ENCODE measurements at regions of chr17 and their contacts with region 1.

Region 1: GRCh38 chr17:35486920-35487732 is 38.6 kb upstream of the SLFN13 start:
- DNase-seq: peak; percentile 39 to 88 (median 77)
- ATAC-seq: peak; percentile 85
- H3K4me3 ChIP-seq: peak overlapping the region; percentile 90
- H3K4me3 Mint-ChIP-seq: peak overlapping the region; percentile 80 to 99 (median 94)
- H3K27ac ChIP-seq: peak overlapping the region; percentile 82
- H3K27ac Mint-ChIP-seq: peak overlapping the region; percentile 84 to 98 (median 97)
- H3K4me1 ChIP-seq: peaks cover 10 to 24% of the 10 kb centered on the region in 2 donors
- H3K4me1 Mint-ChIP-seq: peaks cover 23 to 67% (median 45%) of the 10 kb centered on the region in 7 donors
- H3K27me3 ChIP-seq: no peaks in the 10 kb centered on the region
- H3K27me3 Mint-ChIP-seq: peaks cover 0 to 12% (median 0%) of the 10 kb centered on the region in 5 donors

Region 2: GRCh38 chr17:35170968-35171771 is 316.0 kb before region 1 on chr17:
- CTCF ChIA-PET with region 1: no interaction called
- POLR2A ChIA-PET with region 1: no interaction called
- intact Hi-C with region 1: loop called in 1 of 2 experiments (anchors 5 kb)
- DNase-seq: peak in 7 of 9 donors; percentile 35 to 77 (median 70)
- ATAC-seq: peak; percentile 86
- H3K4me3 ChIP-seq: peak overlapping the region; percentile 25
- H3K4me3 Mint-ChIP-seq: peak overlapping the region in 8 of 10 donors; percentile 46 to 79 (median 70)
- H3K27ac ChIP-seq: peak overlapping the region; percentile 47
- H3K27ac Mint-ChIP-seq: peak overlapping the region; percentile 65 to 96 (median 89)
- H3K4me1 ChIP-seq: peaks cover 16 to 20% of the 10 kb centered on the region in 2 donors
- H3K4me1 Mint-ChIP-seq: peaks cover 24 to 59% (median 44%) of the 10 kb centered on the region in 7 donors
- H3K27me3 ChIP-seq: no peaks in the 10 kb centered on the region
- H3K27me3 Mint-ChIP-seq: no peaks in the 10 kb centered on the region

Region 3: GRCh38 chr17:35373534-35373983 is 113.6 kb before region 1 on chr17 and contains the start of gene SLFN11:
- CTCF ChIA-PET with region 1: interaction called, 3 read pairs
- POLR2A ChIA-PET with region 1: interaction called, 16 read pairs
- intact Hi-C with region 1: loop called (anchors 1 to 2 kb)
- DNase-seq: peak; percentile 49 to 94 (median 80)
- ATAC-seq: peak; percentile 92
- H3K4me3 ChIP-seq: peak within 1 kb of the TSS; percentile 92
- H3K4me3 Mint-ChIP-seq: peak within 1 kb of the TSS; percentile 94 to 99 (median 98)
- H3K27ac ChIP-seq: peak within 1 kb of the TSS; percentile 99
- H3K27ac Mint-ChIP-seq: peak within 1 kb of the TSS; percentile 92 to 99 (median 99)
- H3K4me1 ChIP-seq: peaks cover 2 to 13% of the 10 kb centered on the region in 2 donors
- H3K4me1 Mint-ChIP-seq: peaks cover 23 to 74% (median 54%) of the 10 kb centered on the region in 7 donors
- H3K27me3 ChIP-seq: no peaks in the 10 kb centered on the region
- H3K27me3 Mint-ChIP-seq: peaks cover 0 to 8% (median 0%) of the 10 kb centered on the region in 5 donors
- total RNA-seq, gene SLFN11: 13.8 to 71.9 (median 29.7) TPM

Region 4: DNA sequence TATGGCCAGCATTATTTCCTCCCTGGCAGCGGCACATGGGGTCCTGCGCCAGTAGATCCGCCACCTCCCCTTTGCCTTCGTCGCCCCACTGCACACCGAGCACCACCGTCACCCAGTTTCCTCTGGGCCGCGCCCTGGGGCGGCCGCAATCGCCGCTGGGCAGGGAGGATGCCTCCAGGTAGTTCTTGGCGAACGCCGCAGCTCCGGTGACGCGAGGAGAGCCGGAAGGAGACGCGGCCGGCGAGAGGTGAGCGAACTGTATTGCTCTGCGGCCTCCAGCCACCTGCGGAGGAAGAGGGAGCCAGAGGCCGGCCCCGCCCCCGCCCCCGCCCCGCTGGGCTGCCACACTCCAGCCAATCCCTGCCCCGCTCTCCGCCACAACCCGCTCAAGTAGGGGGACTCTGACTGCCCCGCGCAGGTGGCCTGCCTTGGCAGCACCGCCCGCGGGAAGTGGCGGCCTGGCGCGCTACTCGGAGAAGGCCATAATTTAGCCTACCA is 26.7 kb before region 1 on chr17:
- CTCF ChIA-PET with region 1: no interaction called
- POLR2A ChIA-PET with region 1: interaction called, 14 read pairs
- intact Hi-C with region 1: no loop called
- DNase-seq: peak; percentile 31 to 68 (median 58)
- ATAC-seq: peak; percentile 95
- H3K4me3 ChIP-seq: peak overlapping the region; percentile 46
- H3K4me3 Mint-ChIP-seq: peak overlapping the region; percentile 64 to 88 (median 81)
- H3K27ac ChIP-seq: peak overlapping the region; percentile 31
- H3K27ac Mint-ChIP-seq: peak overlapping the region; percentile 78 to 95 (median 86)
- H3K4me1 ChIP-seq: peaks cover 7 to 14% of the 10 kb centered on the region in 2 donors
- H3K4me1 Mint-ChIP-seq: peaks cover 17 to 44% (median 34%) of the 10 kb centered on the region in 7 donors
- H3K27me3 ChIP-seq: no peaks in the 10 kb centered on the region
- H3K27me3 Mint-ChIP-seq: no peaks in the 10 kb centered on the region

Region 5: DNA sequence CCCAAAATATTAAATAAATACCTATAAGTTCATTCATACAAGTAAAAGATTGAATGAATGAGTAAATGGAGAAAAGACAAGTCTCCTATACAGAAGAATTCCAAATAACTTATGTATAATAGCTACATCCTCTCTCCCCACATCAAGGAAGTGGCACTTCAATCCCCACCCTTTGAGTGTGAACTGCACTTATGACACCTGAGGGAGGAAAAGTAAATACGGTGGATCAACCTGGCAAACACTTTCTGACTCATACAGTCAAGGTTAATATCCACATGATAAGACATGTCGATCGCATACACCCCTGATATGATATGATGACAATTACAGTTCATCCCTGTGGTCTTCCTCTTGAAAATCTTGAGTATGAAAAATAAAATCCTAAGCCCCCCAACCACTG is 32.3 kb after region 1 on chr17:
- CTCF ChIA-PET with region 1: interaction called, 3 read pairs
- POLR2A ChIA-PET with region 1: interaction called, 59 read pairs
- intact Hi-C with region 1: no loop called
- DNase-seq: no peak
- ATAC-seq: no peak
- H3K4me3 ChIP-seq: peak overlapping the region; percentile 25
- H3K4me3 Mint-ChIP-seq: peak overlapping the region in 9 of 10 donors; percentile 6 to 82 (median 57)
- H3K27ac ChIP-seq: no peak overlapping the region
- H3K27ac Mint-ChIP-seq: peak overlapping the region in 5 of 9 donors; percentile 49 to 80 (median 74)
- H3K4me1 ChIP-seq: peaks cover 41 to 86% of the 10 kb centered on the region in 2 donors
- H3K4me1 Mint-ChIP-seq: peaks cover 59 to 98% (median 93%) of the 10 kb centered on the region in 7 donors
- H3K27me3 ChIP-seq: no peaks in the 10 kb centered on the region
- H3K27me3 Mint-ChIP-seq: peaks cover 0 to 4% (median 0%) of the 10 kb centered on the region in 5 donors

Region 6: DNA sequence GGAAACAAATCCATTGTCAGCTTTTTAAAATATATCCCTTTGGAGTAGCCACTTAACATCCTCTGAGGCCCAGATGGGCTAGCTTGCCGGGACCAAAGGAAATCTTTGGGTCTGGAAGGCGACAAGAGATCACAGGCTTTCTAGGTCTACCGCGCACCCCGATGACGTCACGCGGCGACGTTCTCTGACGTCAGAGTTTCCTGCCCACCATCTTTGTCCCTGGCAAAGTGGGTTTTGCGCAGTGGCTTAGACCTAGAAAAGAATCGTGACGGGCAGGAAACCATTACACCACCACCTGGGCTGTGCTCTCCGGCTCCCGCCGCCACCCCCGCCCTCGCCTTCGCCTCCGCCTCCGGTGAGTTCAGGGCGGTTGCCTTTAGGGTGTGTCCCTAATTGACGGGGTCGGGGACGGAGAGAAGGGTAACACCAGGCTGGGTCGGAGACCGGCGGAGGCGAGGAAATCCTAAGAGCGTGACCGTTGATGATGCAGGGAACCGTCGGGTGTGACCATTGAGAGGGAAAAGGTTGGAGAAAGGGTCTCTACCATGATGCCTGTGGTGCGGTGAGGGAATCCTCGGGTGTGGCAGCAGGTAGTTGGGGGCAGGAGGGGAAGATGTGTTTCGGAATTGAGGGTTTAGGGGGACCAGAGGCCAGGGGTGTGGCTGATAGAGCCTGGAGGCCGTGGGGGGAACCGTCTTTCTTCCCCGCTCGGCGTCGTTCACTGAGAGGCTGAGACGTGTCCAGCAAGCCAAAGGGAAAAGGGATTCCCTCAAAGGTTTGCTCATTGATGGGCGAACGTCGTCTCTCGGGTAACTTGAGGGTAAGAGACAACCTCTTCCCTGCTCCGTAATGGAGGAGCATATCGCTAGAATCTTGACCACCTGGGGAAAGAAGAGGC is 100.2 kb after region 1 on chr17 and contains the start of gene AP2B1:
- CTCF ChIA-PET with region 1: no interaction called
- POLR2A ChIA-PET with region 1: no interaction called
- intact Hi-C with region 1: loop called in 1 of 2 experiments (anchors 5 kb)
- DNase-seq: peak; percentile 96 to 100 (median 98)
- ATAC-seq: peak; percentile 99
- H3K4me3 ChIP-seq: peak within 1 kb of the TSS; percentile 85
- H3K4me3 Mint-ChIP-seq: peak within 1 kb of the TSS; percentile 92 to 99 (median 97)
- H3K27ac ChIP-seq: peak within 1 kb of the TSS; percentile 91
- H3K27ac Mint-ChIP-seq: peak within 1 kb of the TSS; percentile 95 to 99 (median 99)
- H3K4me1 ChIP-seq: peaks cover 13 to 17% of the 10 kb centered on the region in 2 donors
- H3K4me1 Mint-ChIP-seq: peaks cover 28 to 45% (median 38%) of the 10 kb centered on the region in 7 donors
- H3K27me3 ChIP-seq: no peaks in the 10 kb centered on the region
- H3K27me3 Mint-ChIP-seq: peaks cover 0 to 12% (median 0%) of the 10 kb centered on the region in 5 donors
- total RNA-seq, gene AP2B1: 84.7 to 197 (median 136) TPM

Region 7: GRCh38 chr17:35898283-35899070 is 411.4 kb after region 1 on chr17:
- CTCF ChIA-PET with region 1: no interaction called
- POLR2A ChIA-PET with region 1: no interaction called
- intact Hi-C with region 1: no loop called
- DNase-seq: no peak
- ATAC-seq: peak; percentile 30
- H3K4me3 ChIP-seq: no peak overlapping the region
- H3K4me3 Mint-ChIP-seq: peak overlapping the region in 2 of 10 donors; percentile 15 to 54
- H3K27ac ChIP-seq: no peak overlapping the region
- H3K27ac Mint-ChIP-seq: peak overlapping the region in 1 of 9 donors; percentile 46
- H3K4me1 ChIP-seq: peaks cover 0 to 77% of the 10 kb centered on the region in 2 donors
- H3K4me1 Mint-ChIP-seq: peaks cover 0 to 51% (median 5%) of the 10 kb centered on the region in 7 donors
- H3K27me3 ChIP-seq: no peaks in the 10 kb centered on the region
- H3K27me3 Mint-ChIP-seq: peaks cover 0 to 19% (median 0%) of the 10 kb centered on the region in 5 donors